ENCODE measurements at regions of chr7 and their contacts with region 1.

Region 1: GRCh38 chr7:155344600-155345433 is 47.1 kb downstream of the INSIG1 start:
- DNase-seq: peak; percentile 77
- H3K4me3 ChIP-seq: peak overlapping the region in 3 of 4 donors; percentile 4 to 48 (median 35)
- H3K27ac ChIP-seq: no peak overlapping the region
- H3K4me1 ChIP-seq: peaks cover 3 to 10% (median 6%) of the 10 kb centered on the region in 4 donors
- H3K27me3 ChIP-seq: peaks cover 17% of the 10 kb centered on the region
- CTCF ChIP-seq: peak; percentile 62 to 97 (median 91)
- EP300 ChIP-seq: no peak
- POLR2A ChIP-seq: no peak

Region 2: DNA sequence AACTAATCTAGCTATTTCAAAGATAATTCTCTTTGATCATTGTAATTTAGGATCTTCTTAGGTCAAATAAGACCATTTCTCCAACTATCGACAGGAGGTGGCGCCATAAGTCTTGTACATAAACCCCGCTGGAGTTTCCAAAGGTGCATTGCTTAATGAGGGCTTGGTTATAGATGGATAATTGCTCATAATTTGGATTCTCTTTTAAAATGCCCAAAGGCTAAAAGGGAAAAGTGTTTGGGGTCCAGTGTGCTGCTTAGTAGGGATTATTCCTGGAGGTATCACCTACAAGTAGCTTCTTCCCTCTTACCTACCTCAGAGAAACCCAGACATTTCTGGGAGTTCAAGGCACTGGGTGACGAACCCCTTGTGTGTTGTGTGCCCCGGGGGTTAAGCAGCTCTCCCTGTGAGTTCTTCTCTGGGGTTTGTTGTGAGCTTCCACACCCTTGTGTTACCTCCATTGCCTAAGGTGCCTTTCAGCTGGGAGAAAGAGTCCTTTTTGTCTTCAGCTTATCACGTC is 417.1 kb before region 1 on chr7:
- in situ Hi-C with region 1: loop called in 3 of 4 experiments (anchors 10 to 25 kb)
- intact Hi-C with region 1: loop called (anchors 10 kb)
- DNase-seq: peak; percentile 87
- H3K4me3 ChIP-seq: peak overlapping the region; percentile 40 to 81 (median 48)
- H3K27ac ChIP-seq: peak overlapping the region; percentile 87 to 95 (median 91)
- H3K4me1 ChIP-seq: peaks cover 0 to 9% (median 7%) of the 10 kb centered on the region in 4 donors
- H3K27me3 ChIP-seq: no peaks in the 10 kb centered on the region
- CTCF ChIP-seq: peak; percentile 61 to 72 (median 67)
- EP300 ChIP-seq: no peak
- POLR2A ChIP-seq: no peak

Region 3: DNA sequence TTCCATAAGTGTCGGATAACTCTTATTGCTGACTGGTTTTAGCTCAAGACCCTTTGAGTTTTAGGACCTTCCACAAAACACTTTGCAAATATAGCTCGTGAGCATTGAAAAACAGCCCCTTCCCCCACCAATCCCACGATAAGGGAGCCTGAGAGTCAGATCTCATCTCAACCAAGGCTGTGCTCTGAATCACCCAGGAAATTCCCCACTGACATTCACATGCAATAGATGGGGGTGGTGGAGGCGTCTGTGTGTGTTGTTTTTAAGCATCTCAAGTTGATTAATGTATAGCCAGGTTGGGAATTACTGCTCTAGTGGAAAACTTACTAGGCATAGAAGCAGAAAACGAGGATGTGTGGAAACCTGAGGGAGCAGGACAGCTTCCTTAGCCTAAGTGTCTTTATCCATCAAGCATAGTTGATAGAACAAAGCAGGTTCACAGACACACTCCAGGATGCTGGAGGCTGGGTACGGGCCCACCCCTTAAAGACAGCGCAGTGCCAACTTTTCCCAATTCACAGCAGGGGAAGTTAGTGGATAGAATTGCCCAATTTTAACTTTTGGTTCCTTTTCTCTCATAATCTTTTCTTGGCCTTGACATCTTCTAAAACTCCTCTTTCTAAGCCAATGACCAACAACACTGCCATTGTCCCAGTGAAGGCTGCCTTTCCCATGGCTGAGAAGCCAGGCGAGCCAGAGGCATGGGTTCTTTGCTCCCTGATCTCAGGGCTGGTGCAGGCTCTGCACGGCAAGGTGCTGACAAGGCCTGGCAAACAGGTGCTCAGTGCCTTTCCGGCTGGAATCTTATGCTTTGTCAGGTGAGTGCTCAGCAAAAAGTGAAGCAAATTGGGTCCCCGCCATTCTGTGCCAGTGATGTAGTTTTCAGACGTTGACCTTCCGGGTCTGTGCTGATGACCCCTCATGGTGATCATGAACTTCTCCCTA is 145.6 kb before region 1 on chr7:
- in situ Hi-C with region 1: loop called in 1 of 4 experiments (anchors 25 kb)
- intact Hi-C with region 1: loop called (anchors 1 kb)
- DNase-seq: no peak
- H3K4me3 ChIP-seq: no peak overlapping the region
- H3K27ac ChIP-seq: no peak overlapping the region
- H3K4me1 ChIP-seq: no peaks in the 10 kb centered on the region
- H3K27me3 ChIP-seq: peaks cover 8% of the 10 kb centered on the region
- CTCF ChIP-seq: no peak
- EP300 ChIP-seq: no peak
- POLR2A ChIP-seq: no peak

Region 4: DNA sequence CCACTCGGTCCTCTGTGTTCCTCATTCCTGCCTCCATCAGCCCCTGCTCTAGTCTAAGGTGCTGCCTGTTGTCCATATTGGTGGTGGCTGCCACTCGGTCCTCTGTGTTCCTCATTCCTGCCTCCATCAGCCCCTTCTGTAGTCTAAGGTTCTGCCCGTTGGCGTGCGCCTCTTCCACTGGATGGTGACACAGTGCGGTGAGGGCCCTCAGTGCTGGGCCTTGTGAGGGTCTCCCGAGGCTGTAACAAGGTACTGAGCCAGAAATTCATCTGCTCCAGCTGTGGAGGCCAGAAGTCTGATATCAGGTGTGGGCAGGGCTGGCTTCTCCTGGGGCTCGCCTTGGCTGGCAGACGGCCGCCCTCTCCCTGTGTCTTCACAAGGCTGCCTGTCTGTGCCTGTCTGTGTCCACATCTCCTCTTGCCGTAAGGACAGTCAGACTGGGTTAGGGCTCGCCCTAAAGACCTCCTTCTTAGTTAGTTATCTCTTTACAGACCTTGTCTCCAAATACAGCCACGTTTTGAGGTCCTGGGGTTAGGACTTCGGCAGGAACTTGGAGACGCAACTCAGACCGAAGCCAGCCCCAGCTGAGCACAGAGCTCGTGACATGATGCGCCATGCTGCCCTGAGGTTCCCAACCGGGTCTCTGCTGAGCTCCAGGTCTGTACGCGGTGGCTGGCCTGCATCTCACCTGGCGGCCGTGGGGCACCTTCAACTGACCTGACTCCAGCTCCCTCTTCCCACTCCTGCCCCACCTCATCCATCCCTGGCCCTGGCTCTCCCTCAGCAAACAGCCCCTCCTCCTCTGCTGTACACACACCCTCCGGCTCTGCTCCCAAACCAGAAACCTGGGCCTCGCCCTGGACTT is 648.8 kb after region 1 on chr7:
- in situ Hi-C with region 1: no loop called
- intact Hi-C with region 1: no loop called
- DNase-seq: no peak
- H3K4me3 ChIP-seq: no peak overlapping the region
- H3K27ac ChIP-seq: no peak overlapping the region
- H3K4me1 ChIP-seq: peaks cover 0 to 7% (median 0%) of the 10 kb centered on the region in 4 donors
- H3K27me3 ChIP-seq: peaks cover 30% of the 10 kb centered on the region
- CTCF ChIP-seq: no peak
- EP300 ChIP-seq: no peak
- POLR2A ChIP-seq: no peak

Measured in transverse colon (tissue), 4 donors.